Adrenal gland (tissue), 19 donors: ENCODE measurements at regions of chr11 and their contacts with region 1.

Region 1: GRCh38 chr11:20127671-20128527 is 32.4 kb downstream of the DBX1 start:
- DNase-seq: peak; percentile 68 to 89 (median 79)
- H3K4me3 ChIP-seq: no peak overlapping the region
- H3K27ac ChIP-seq: no peak overlapping the region
- H3K4me1 ChIP-seq: peaks cover 0 to 6% of the 10 kb centered on the region in 2 donors
- H3K27me3 ChIP-seq: no peaks in the 10 kb centered on the region
- CTCF ChIP-seq: peak; percentile 71 to 90 (median 82)
- POLR2A ChIP-seq: no peak

Region 2: DNA sequence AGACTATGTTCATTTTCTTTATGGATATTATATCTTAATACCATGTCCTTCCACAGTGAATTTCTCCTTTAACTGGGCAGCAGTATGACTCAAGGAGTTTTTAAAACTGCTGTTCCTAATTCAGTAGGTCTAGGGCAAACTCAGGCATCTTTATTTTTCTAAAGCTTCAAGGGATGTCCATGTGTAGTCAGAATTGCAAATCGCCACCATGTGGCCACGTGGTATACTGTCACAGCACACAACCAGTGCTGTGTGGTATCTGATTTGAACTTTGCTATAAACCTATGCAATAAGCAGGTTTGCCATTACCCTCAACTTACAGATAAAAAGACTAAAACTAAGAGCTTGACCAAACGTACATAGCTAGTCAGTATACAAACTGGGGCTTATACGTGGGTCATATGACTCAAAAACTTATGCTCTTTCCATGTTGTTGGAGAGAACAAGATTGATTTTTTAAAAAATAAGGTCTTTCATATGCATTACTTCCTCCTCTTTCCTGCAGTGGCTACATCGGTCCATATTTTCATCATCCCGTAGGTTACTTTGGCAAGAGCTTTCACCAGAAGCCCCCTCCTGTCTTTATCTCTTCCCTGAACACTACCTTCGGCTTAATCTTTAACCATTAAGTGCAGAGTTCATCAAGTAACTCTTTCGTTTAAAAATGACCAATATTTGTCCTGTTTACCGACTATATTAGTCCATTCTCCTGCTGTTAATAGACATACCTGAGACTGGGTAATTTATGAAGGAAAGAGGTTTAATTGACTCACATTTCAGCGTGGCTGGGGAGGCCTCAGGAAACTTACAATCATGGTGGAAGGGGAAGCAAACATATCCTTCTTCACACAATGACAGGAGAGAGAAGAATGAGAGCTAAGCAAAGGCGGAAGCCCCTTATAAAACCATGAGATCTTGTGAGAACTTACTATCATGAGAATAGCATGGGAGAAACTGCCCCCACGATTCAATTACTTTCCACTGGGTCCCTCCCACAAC is 227.6 kb after region 1 on chr11:
- intact Hi-C with region 1: loop called (anchors 5 to 10 kb)
- DNase-seq: peak in 3 of 7 donors; percentile 53 to 66 (median 54)
- H3K4me3 ChIP-seq: no peak overlapping the region
- H3K27ac ChIP-seq: no peak overlapping the region
- H3K4me1 ChIP-seq: peaks cover 0 to 4% of the 10 kb centered on the region in 2 donors
- H3K27me3 ChIP-seq: no peaks in the 10 kb centered on the region
- CTCF ChIP-seq: peak; percentile 36 to 63 (median 54)
- POLR2A ChIP-seq: no peak